ENCODE measurements at regions of chr11 and their contacts with region 1.

Region 1: DNA sequence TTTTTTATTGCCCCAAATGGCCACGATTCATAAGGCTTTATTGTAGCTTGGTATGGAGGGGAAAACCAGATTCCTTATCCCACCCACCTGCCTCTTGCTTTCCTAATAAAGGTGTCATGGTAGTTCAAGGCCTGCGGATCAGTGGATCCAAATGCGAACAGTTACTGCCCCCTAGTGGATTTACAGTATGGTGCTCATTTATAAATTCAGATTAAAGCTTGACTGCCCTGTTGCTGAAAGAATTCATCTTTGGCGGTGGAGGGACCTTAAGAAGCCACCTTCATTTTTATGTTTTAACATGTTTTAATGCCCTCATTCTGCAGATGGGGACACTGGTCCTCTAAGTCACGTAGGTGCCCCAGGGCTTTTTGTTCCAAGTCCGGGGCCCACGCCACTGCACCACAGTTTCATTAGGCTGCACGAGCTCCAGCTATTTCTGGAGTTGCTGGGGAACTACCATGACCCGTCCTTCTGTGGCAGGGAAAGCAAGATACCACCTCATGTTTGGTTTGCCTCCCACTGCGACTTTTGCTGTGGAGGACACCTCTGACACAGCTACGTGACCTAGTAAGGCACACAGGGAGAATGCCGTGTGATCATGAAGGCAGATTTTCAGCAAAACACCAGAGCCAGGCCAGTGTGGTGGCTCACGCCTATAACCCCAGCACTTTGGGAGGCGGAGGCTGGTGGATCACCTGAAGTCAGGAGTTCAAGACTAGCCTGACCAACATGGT is 15.6 kb upstream of the INCENP start:
- DNase-seq: peak in 1 of 2 donors; percentile 57
- ATAC-seq: peak in 3 of 8 donors; percentile 28 to 36 (median 32)
- H3K4me3 ChIP-seq: no peak overlapping the region
- H3K27ac ChIP-seq: peak overlapping the region in 4 of 10 donors; percentile 31 to 59 (median 42)
- H3K4me1 ChIP-seq: peaks cover 13 to 48% (median 28%) of the 10 kb centered on the region in 9 donors
- H3K27me3 ChIP-seq: no peaks in the 10 kb centered on the region
- CTCF ChIP-seq: peak; percentile 81 to 91 (median 88)

Region 2: DNA sequence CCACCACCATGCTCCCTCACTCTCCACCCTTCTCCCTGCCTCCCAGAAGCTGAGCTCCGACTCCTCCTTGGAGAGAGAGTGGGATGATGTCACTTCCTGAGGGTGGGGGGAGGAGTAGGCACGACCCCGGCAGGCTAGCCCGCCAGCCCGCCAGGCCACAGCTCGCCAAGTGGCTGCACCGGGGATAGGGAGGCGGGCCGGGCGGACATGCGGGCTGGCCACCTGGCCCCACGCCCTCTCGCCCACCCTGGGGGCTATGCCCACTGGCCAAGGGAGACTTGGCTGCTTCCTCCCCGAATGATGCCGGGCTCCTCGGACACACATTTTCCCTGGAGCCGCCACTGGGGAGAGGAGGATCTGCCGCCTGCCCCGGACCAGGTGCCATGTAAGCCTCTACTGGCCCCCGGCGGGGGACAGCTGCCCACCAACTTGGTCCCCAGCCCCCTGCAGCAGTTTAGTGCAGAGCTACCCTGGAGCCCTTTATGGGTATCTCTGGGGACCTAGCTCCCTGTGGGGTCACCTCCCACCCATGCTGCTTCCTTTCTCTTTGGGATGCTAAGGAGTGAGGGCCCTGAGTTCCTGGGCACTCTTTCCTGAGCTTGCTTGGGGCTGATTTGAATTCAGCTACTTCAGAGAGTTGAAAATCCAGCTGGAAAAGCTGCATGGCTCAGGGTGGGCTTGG is 389.4 kb before region 1 on chr11:
- intact Hi-C with region 1: no loop called
- DNase-seq: peak in 1 of 2 donors; percentile 70
- ATAC-seq: peak; percentile 62 to 86 (median 80)
- H3K4me3 ChIP-seq: peak overlapping the region in 9 of 10 donors; percentile 16 to 55 (median 54)
- H3K27ac ChIP-seq: peak overlapping the region in 8 of 10 donors; percentile 38 to 77 (median 61)
- H3K4me1 ChIP-seq: peaks cover 0 to 39% (median 16%) of the 10 kb centered on the region in 9 donors
- H3K27me3 ChIP-seq: no peaks in the 10 kb centered on the region
- CTCF ChIP-seq: no peak

Region 3: DNA sequence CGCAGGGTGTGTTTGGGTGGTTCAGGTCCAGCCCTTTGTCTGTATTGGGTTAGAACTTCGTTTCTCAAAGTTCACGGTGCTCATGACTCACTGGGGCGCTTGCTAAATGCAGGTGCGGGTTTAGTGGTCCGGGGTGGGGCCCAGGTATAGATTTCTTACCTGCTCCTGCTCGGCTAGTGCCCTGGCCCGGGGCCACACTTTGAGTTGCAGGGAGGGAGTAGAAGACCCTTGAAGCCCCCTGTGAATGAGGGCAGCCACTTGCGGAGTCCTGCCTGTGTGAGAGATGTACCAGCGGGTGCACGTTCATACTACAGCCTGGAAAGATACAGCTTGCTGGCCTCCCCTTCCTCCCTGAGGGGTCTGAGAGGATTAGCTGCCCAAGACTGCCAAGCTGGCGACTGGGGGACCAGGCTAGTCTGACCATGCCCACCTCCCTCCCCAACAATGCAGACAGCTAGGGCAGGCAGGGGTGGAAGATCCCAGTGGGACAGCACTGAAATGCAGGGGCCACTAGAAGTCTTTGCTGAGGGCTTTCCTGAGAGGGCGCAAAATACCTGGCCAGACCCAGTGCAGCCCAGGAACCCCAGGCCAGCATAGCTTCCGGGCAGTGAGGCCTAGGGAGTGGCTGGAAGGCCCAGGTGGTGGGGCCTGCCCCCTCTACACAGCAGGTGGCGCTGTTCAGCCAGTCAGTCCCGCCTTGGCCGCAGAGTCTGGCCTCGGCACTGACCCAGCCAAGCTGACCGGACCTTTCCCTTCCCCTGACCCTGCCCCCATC is 360.8 kb before region 1 on chr11:
- intact Hi-C with region 1: loop called in 5 of 10 experiments (anchors 2 to 5 kb)
- DNase-seq: peak; percentile 70 to 79
- ATAC-seq: peak; percentile 78 to 90 (median 82)
- H3K4me3 ChIP-seq: no peak overlapping the region
- H3K27ac ChIP-seq: no peak overlapping the region
- H3K4me1 ChIP-seq: peaks cover 0 to 16% (median 5%) of the 10 kb centered on the region in 9 donors
- H3K27me3 ChIP-seq: peaks cover 0 to 23% (median 4%) of the 10 kb centered on the region in 7 donors
- CTCF ChIP-seq: peak; percentile 74 to 91 (median 85)

Region 4: DNA sequence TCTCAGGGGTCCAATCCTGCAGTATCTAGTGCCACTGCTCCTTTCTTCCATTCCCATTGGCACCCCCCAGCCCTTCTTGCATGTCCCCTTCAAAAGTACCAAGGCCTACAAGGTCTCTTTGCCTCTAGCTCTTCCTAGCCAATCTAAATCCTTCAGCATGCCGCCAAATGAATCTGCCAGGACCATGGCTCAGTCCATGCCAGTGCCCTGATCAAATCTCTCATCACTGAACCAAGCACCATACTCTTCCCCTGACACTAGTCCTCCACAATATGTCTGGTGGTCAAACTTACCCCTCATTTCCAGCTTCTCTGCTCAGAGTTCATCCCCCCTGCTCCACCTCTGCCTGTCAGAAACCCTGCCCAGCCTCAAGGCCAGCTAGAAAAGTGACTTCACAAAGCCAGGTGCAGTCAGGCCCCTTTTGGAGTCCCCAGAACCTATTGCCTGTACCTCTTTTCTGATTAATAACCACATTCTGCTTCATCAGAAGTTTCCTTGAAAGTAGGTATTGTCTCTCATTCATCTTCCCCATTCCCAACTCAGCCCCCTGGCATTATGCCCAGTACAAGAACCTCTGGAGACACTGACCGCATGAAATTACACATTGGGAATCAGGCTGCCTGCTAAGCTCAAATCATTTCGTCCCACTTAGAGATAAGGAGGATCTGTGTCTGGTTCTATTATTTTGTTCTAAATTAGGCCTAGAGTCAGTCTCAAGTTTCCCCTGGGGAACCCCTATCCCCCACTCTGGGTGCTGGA is 304.1 kb before region 1 on chr11:
- intact Hi-C with region 1: loop called in 4 of 10 experiments (anchors 2 to 5 kb)
- DNase-seq: no peak
- ATAC-seq: no peak
- H3K4me3 ChIP-seq: no peak overlapping the region
- H3K27ac ChIP-seq: no peak overlapping the region
- H3K4me1 ChIP-seq: peaks cover 0 to 9% (median 0%) of the 10 kb centered on the region in 9 donors
- H3K27me3 ChIP-seq: no peaks in the 10 kb centered on the region
- CTCF ChIP-seq: no peak

Region 5: DNA sequence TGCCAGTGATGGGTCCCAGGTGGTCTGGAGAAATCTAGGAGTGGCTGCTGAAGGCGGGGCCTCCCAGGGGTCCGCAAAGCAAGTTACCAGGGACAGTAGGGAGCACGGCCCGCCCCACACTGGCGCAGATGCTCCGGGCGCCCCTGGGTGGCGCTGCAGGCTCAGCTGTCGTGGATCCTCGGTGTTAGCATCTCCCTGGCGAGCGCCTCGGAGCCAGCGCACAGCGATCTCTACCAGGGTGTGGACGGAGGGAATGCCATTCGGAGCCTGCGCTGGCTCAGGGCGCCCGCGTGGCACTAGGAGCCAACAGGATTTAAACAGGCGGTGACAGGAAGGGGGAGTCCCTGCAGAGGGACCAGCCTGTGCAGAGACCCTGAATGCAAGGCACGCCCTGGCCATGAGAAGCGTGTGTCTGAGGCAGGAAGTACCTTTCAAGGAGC is 237.0 kb before region 1 on chr11:
- intact Hi-C with region 1: loop called in 1 of 10 experiments (anchors 2 kb)
- DNase-seq: peak; percentile 79 to 87
- ATAC-seq: peak; percentile 82 to 91 (median 88)
- H3K4me3 ChIP-seq: peak overlapping the region in 4 of 10 donors; percentile 10 to 40 (median 25)
- H3K27ac ChIP-seq: peak overlapping the region in 9 of 10 donors; percentile 5 to 72 (median 53)
- H3K4me1 ChIP-seq: peaks cover 6 to 51% (median 31%) of the 10 kb centered on the region in 9 donors
- H3K27me3 ChIP-seq: no peaks in the 10 kb centered on the region
- CTCF ChIP-seq: peak; percentile 92 to 98 (median 94)

Region 6: GRCh38 chr11:61891331-61892084 is 216.7 kb before region 1 on chr11 and contains the start of gene FADS3:
- intact Hi-C with region 1: loop called in 2 of 10 experiments (anchors 5 kb)
- DNase-seq: peak; percentile 88 to 92
- ATAC-seq: peak; percentile 85 to 91 (median 87)
- H3K4me3 ChIP-seq: peak within 1 kb of the TSS; percentile 63 to 98 (median 93)
- H3K27ac ChIP-seq: peak within 1 kb of the TSS; percentile 84 to 98 (median 96)
- H3K4me1 ChIP-seq: peaks cover 14 to 58% (median 41%) of the 10 kb centered on the region in 9 donors
- H3K27me3 ChIP-seq: no peaks in the 10 kb centered on the region
- CTCF ChIP-seq: peak in 3 of 9 donors; percentile 3 to 29 (median 22)
- total RNA-seq, gene FADS3: 54.9 to 119 (median 71.1) TPM

Region 7: DNA sequence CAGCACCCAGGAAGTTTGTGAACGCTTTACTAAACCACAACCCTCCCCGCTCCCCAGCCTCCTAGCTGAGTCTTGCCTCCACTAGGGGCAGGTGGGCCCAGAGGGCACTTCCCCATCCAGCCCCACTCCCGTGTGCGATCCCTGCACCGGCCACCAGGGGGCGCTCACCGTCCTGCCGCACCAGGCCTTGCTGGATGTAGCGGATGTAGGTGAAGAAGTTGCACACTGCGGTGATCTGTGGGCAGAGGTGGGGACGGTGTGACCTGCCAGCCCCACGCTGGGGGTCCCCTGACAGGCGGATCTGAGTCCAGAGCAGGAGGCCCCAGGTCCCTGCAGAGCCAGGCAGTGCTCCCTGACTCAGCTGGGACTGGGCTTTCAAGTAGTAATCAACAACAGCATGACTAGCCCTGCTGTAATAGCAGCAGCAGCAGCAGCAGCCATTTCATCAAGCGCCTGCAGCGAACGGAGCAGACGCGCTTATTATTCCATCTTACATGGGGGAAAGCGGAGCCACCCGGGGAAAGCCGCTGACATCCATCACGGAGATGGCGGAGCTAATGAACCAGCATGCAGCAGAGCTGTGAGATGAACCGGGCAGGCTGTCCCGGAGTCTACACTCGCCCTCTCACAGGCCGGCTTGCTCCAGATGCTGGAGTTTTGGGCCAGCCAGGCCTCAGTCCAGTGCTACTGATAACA is 208.9 kb before region 1 on chr11:
- intact Hi-C with region 1: loop called in 4 of 10 experiments (anchors 1 to 5 kb)
- DNase-seq: peak; percentile 84 to 88
- ATAC-seq: peak; percentile 67 to 87 (median 82)
- H3K4me3 ChIP-seq: no peak overlapping the region
- H3K27ac ChIP-seq: peak overlapping the region in 6 of 10 donors; percentile 2 to 61 (median 42)
- H3K4me1 ChIP-seq: peaks cover 0 to 22% (median 10%) of the 10 kb centered on the region in 9 donors
- H3K27me3 ChIP-seq: no peaks in the 10 kb centered on the region
- CTCF ChIP-seq: peak; percentile 98 to 100 (median 100)